Lower leg skin (tissue), 4 donors: ENCODE measurements at regions of chr20 and their contacts with region 1.

Region 1: DNA sequence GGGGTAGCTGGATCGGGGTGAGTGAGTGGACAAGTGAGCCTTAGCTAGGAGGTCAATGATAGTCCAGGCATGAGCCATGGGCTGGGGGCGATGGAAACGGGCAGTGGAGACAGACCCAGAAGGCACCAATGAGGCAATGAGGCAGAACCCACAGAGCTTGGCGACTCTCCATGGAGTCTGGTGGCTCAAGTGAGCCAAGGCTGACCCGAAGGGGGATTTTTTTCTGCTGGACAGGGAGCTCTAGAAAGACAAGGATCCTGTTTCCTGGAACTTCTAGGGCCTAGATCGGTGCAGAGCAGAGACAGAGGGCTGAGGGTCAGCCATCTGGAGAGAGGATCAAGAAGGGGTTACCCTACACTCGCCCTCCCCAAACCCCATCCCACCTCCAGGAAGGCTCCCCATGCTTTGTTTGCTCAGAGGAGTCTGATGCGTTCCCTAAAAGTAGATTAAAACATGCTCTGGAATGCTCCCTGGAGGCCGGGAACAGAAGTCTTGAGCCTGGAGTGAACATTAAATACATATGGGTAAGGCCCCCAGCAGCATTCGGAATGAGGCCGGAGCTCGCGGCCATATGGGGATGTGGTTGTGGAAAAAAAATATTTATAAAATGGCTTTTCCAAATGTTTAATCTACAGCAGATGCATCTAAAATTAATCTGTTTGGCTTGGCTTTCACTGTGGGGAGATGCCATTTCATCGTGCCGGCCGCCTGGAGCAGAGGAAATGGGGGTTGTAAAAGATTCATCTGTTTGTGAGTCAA is 237.8 kb upstream of the PMEPA1 start:
- DNase-seq: no peak
- H3K4me3 ChIP-seq: no peak overlapping the region
- CTCF ChIP-seq: no peak
- POLR2A ChIP-seq: no peak

Region 2: DNA sequence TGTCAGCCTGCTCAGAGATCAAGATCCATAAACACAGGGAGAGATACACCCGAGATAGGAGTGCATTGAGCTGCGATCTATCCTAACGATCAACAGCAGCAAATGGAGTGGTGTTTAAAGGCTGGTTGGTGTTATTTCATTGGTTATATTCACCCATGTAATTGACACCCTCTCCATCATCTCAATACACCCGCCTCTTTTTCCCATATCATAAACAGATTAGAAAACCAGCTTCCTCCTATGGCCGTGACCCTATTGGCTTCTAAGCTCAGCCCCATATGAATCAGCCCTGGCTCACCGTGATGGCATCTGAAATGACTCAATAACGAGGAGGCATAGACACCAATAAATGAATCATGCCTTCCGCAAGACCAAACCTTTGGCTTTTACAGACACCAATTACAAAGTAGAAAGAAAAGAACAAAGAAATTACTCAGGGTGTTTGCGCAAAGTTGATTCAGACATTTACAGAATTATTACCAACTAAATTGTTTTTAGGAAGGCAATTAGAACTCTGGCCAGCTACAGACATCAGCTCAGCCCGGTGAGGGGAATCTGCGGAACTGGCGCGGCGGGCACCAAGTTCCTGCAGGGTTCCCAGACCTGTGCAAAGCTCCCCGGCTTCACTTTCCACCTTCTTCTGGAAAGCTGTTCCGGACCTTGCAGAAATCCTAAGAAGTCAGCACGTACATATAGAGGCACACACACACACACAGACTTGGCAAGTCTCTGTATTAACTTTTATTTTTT is 249.3 kb before region 1 on chr20:
- intact Hi-C with region 1: loop called (anchors 5 kb)
- DNase-seq: peak in 1 of 2 donors; percentile 64
- H3K4me3 ChIP-seq: no peak overlapping the region
- CTCF ChIP-seq: no peak
- POLR2A ChIP-seq: no peak